ENCODE measurements at regions of chr12 and their contacts with region 1.

Region 1: GRCh38 chr12:10140001-10140400 is 10.0 kb upstream of the CLEC7A start:
- DNase-seq: peak in 13 of 14 experiments; percentile 10 to 74 (median 22)
- ATAC-seq: peak; percentile 60
- H3K4me3 ChIP-seq: no peak overlapping the region
- H3K4me3 Mint-ChIP-seq: no peak overlapping the region
- H3K27ac ChIP-seq: no peak overlapping the region
- H3K27ac Mint-ChIP-seq: no peak overlapping the region
- H3K4me1 ChIP-seq: no peaks in the 10 kb centered on the region
- H3K4me1 Mint-ChIP-seq: no peaks in the 10 kb centered on the region
- H3K27me3 ChIP-seq: peaks cover 0 to 4% of the 10 kb centered on the region in 2 experiments
- H3K27me3 Mint-ChIP-seq: peaks cover 4% of the 10 kb centered on the region
- CTCF ChIP-seq: peak; percentile 18

Region 2: DNA sequence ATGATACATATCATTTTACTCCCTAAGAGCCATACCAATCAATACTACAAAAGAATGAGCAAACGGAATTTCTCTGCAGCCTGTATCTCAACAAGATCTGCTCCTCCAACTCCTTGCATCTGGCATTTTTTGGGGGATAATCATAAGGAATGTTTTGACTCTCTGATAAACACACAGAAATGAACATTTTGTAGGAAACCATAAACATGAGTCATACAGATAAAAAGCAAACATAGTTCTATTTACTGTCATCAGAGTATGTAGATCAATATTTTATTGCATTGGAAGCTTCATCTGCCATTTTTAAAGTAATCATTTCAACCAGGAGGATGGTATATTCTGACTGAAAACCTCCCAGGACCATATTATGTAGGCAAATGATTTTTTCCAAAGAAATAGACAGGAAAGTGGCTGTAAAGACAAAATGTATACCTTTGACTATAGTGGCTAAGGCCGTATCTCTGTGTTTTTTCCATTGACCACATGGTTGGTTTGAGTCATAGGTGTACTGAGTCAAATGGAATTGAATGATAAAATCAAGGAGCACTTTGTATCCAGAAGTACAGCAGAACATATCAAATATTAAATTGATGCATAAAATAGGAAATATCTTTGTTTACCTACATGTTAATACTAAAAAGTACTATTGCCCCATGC is 346.9 kb before region 1 on chr12:
- CTCF ChIA-PET with region 1: no interaction called
- POLR2A ChIA-PET with region 1: no interaction called
- intact Hi-C with region 1: no loop called
- DNase-seq: no peak
- ATAC-seq: no peak
- H3K4me3 ChIP-seq: no peak overlapping the region
- H3K4me3 Mint-ChIP-seq: no peak overlapping the region
- H3K27ac ChIP-seq: no peak overlapping the region
- H3K27ac Mint-ChIP-seq: no peak overlapping the region
- H3K4me1 ChIP-seq: peaks cover 18% of the 10 kb centered on the region
- H3K4me1 Mint-ChIP-seq: peaks cover 56% of the 10 kb centered on the region
- H3K27me3 ChIP-seq: no peaks in the 10 kb centered on the region
- H3K27me3 Mint-ChIP-seq: no peaks in the 10 kb centered on the region
- CTCF ChIP-seq: no peak

Region 3: GRCh38 chr12:9940375-9940774 is 199.6 kb before region 1 on chr12:
- CTCF ChIA-PET with region 1: no interaction called
- POLR2A ChIA-PET with region 1: no interaction called
- intact Hi-C with region 1: loop called (anchors 5 to 10 kb)
- DNase-seq: peak in 3 of 14 experiments; percentile 38 to 43 (median 41)
- ATAC-seq: no peak
- H3K4me3 ChIP-seq: no peak overlapping the region
- H3K4me3 Mint-ChIP-seq: no peak overlapping the region
- H3K27ac ChIP-seq: no peak overlapping the region
- H3K27ac Mint-ChIP-seq: no peak overlapping the region
- H3K4me1 ChIP-seq: peaks cover 4% of the 10 kb centered on the region
- H3K4me1 Mint-ChIP-seq: peaks cover 31% of the 10 kb centered on the region
- H3K27me3 ChIP-seq: no peaks in the 10 kb centered on the region
- H3K27me3 Mint-ChIP-seq: peaks cover 4% of the 10 kb centered on the region
- CTCF ChIP-seq: peak; percentile 42

Region 4: GRCh38 chr12:9948606-9949296 is 191.2 kb before region 1 on chr12:
- CTCF ChIA-PET with region 1: no interaction called
- POLR2A ChIA-PET with region 1: no interaction called
- intact Hi-C with region 1: loop called (anchors 5 to 10 kb)
- DNase-seq: peak in 3 of 14 experiments; percentile 45 to 63 (median 49)
- ATAC-seq: peak; percentile 38
- H3K4me3 ChIP-seq: no peak overlapping the region
- H3K4me3 Mint-ChIP-seq: no peak overlapping the region
- H3K27ac ChIP-seq: no peak overlapping the region
- H3K27ac Mint-ChIP-seq: no peak overlapping the region
- H3K4me1 ChIP-seq: peaks cover 17% of the 10 kb centered on the region
- H3K4me1 Mint-ChIP-seq: peaks cover 47% of the 10 kb centered on the region
- H3K27me3 ChIP-seq: no peaks in the 10 kb centered on the region
- H3K27me3 Mint-ChIP-seq: no peaks in the 10 kb centered on the region
- CTCF ChIP-seq: no peak

Region 5: DNA sequence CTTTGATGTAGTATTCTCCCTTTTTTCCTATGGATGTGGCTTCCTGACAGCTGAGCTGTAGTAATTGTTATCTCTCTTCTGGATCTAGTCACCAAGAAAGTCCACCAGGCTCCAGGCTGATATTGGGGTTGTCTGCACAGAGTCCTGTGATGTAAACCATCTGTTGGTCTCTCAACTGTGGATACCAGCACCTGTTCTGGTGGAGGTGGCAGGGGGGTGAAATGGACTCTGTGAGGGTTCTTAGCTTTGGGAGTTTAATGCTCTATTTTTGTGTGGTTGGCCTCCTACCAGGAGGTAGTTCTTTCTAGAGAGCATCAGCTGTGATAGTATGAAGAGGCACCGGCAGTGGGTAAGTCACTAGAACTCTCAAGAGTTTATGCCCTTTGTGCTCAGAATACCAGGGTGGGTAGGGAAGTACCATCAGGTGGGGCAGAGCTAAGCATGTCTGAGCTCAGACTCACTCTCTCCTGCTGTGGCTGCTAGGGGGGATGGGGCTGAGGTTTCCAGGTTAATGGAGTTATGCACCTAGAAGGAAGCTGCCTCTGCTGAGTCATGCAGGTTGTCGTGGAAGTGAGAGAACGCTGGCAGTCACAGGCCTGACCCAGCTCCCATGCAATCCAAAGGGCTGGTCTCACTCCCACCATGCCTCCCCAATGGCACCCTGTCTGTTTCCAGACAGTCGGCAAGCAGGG is 802.1 kb after region 1 on chr12:
- CTCF ChIA-PET with region 1: no interaction called
- POLR2A ChIA-PET with region 1: no interaction called
- intact Hi-C with region 1: no loop called
- DNase-seq: no peak
- ATAC-seq: no peak
- H3K4me3 ChIP-seq: no peak overlapping the region
- H3K4me3 Mint-ChIP-seq: no peak overlapping the region
- H3K27ac ChIP-seq: no peak overlapping the region
- H3K27ac Mint-ChIP-seq: no peak overlapping the region
- H3K4me1 ChIP-seq: no peaks in the 10 kb centered on the region
- H3K4me1 Mint-ChIP-seq: peaks cover 18% of the 10 kb centered on the region
- H3K27me3 ChIP-seq: no peaks in the 10 kb centered on the region
- H3K27me3 Mint-ChIP-seq: no peaks in the 10 kb centered on the region
- CTCF ChIP-seq: no peak